ENCODE measurements at regions of chr14 and their contacts with region 1.

Region 1: GRCh38 chr14:100192672-100193416 is 33.4 kb upstream of the DEGS2 start:
- DNase-seq: peak; percentile 100
- ATAC-seq: peak; percentile 100
- H3K4me3 Mint-ChIP-seq: peak overlapping the region; percentile 58
- H3K27ac Mint-ChIP-seq: peak overlapping the region; percentile 90
- H3K4me1 Mint-ChIP-seq: peaks cover 15% of the 10 kb centered on the region
- H3K27me3 Mint-ChIP-seq: no peaks in the 10 kb centered on the region

Region 2: DNA sequence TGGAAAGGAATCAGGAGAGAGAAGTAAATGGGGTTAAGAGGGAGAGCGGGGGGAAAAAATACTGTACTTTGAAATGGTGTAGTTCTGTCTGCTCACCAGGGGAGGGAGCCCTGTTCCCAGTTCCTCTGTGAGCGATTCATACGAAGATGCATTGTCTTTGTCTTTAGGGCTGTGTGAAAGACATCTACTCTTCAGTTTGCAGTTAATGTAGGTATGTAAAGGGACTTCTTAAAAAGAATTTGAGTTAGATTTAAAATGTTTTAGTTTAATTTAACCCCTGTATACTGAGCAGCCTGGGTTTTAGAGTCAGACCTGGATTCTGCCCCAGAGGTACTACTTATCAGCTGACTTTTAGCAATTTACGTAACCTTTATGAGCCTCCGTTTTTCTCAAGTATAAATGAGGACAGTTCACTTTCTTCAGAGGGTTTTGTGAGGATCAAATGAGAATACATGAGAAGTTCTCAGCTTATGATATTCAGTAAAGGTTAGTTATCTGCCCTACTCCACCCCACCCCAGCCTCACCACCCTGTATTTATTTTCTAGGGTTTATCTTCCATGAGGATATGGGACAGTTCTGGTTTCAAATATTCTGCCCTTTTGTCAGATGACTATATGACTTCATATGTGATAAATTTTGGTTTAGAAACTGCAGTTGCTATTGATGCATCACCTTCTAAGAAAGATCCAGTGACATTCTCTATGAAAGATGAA is 210.2 kb before region 1 on chr14:
- CTCF ChIA-PET with region 1: interaction called, 50 read pairs
- DNase-seq: peak; percentile 70
- ATAC-seq: peak; percentile 92
- H3K4me3 Mint-ChIP-seq: no peak overlapping the region
- H3K27ac Mint-ChIP-seq: no peak overlapping the region
- H3K4me1 Mint-ChIP-seq: peaks cover 18% of the 10 kb centered on the region
- H3K27me3 Mint-ChIP-seq: no peaks in the 10 kb centered on the region

Region 3: DNA sequence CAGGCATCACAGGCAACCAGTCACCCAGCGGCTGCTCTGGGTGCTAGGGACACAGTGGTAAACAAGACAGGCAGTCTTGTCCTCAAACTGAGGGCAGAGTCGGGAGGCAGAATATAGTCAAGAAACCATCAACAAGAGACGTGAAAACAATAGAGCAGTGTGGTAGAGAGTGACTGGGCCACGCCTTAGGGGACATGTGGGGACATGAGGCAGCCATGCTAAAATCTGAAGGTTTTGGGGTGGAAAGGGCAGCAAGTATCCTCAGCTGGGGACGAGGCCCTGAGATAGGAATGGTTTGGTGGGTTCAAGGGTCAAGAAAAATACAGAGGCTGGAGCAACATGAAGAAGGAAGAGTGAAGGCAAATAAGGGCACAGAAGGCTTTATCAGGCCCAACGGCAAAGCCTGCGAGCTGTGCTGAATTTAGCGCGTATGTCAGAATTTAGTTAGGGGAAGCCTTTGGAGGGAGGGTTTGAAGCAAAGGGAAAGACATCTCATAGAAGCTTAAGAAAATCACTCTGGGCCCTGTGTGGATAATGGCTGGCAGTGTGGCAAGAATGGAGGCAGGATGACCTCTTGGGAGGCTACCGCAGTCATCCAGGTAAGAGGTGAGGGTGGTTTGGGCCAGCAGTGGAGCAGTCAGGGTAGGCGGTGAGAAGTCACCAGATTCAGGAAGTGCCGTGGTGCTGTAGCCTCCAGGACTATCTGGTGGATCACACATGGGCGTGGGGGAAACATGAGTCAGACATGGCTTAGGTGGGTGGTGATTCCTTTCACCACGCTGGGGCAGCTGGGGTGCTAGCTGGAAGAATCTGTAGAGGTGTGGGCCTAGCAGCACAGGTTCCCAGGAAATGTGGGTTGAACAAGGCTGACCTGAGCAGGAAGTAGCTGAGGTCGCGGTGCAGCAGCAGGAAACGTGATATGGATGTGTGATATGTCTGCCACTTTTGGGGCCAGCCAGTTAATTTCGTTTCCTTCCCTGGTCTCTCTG is 124.6 kb before region 1 on chr14:
- CTCF ChIA-PET with region 1: interaction called, 37 read pairs
- DNase-seq: peak; percentile 96
- ATAC-seq: peak; percentile 54
- H3K4me3 Mint-ChIP-seq: peak overlapping the region; percentile 97
- H3K27ac Mint-ChIP-seq: peak overlapping the region; percentile 99
- H3K4me1 Mint-ChIP-seq: peaks cover 54% of the 10 kb centered on the region
- H3K27me3 Mint-ChIP-seq: no peaks in the 10 kb centered on the region

Region 4: DNA sequence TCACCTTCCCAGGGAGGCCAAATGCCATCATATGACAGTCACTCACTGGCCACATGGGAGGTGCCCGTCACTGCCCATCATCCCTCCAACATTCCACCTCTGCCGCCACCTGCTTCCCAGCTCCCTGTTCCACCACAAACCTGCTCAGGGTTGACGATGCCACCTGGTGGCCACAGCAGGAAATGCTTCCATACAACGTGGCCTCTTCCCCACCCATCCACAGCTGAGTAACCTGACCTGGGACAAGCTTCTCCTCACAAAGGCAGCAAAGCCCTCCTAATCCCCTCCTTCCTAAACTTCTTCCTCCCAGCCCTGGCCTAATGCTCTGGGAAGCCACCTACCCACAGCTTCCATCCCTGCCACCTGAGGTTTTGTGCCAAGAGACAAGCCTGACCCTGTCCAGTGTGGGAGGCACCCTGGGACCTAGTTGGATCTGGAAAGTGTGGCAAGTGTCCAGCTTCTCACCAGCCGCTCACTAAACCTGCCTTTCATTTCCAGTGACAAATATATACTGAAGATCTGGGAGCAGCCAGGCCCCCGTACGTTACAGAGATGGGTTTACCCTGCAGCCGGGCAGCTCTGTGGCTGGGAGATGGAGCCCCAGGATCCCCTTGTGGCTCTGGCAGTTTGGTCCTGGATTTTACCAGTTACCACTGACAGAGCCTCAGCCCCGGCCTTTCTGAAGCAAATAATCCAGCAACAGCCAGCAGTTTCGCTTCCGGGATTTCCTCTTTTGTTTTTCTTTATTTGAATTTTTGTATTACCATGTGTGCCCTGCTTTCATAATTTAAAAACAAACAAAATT is 37.6 kb before region 1 on chr14:
- CTCF ChIA-PET with region 1: interaction called, 26 read pairs
- DNase-seq: no peak
- ATAC-seq: no peak
- H3K4me3 Mint-ChIP-seq: no peak overlapping the region
- H3K27ac Mint-ChIP-seq: no peak overlapping the region
- H3K4me1 Mint-ChIP-seq: peaks cover 7% of the 10 kb centered on the region
- H3K27me3 Mint-ChIP-seq: peaks cover 29% of the 10 kb centered on the region

Region 5: DNA sequence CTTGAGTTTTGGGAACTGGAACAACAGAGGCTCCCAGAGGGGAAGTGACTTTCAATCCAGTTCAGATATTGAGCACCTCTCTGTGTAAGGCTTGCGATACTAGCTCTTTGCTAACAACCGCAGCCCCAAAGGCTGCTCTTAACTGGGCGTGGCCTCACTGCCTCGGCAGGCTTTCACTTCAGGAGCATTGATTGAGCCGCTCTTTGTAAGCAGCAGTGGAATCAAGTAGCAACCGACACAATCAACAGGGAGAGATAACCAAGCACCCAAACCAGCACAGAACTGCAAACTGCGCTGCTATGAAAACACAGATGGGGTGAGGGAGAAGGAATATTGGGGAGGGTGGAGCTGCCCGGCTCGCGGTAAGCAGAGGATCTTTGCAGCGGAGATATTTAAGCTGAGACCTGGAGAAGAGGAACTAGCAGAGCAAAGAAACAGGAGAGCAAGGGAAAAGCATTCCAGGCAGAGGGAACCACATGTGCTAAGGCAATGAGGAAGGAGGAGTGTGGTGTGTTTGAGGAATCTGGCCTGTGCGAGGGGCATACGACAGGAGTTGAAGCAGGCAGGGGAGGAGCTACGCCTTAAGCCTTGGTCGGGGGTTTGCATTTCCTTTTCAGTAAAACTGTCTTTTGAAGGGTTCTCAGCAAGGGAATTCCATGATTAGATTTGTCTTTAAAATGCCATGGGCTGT is 28.8 kb after region 1 on chr14:
- CTCF ChIA-PET with region 1: interaction called, 56 read pairs
- DNase-seq: peak; percentile 89
- ATAC-seq: peak; percentile 93
- H3K4me3 Mint-ChIP-seq: no peak overlapping the region
- H3K27ac Mint-ChIP-seq: no peak overlapping the region
- H3K4me1 Mint-ChIP-seq: peaks cover 33% of the 10 kb centered on the region
- H3K27me3 Mint-ChIP-seq: no peaks in the 10 kb centered on the region

Region 6: GRCh38 chr14:100285021-100285912 is 92.4 kb after region 1 on chr14:
- CTCF ChIA-PET with region 1: interaction called, 13 read pairs
- DNase-seq: peak; percentile 83
- ATAC-seq: peak; percentile 93
- H3K4me3 Mint-ChIP-seq: peak overlapping the region; percentile 67
- H3K27ac Mint-ChIP-seq: peak overlapping the region; percentile 61
- H3K4me1 Mint-ChIP-seq: peaks cover 19% of the 10 kb centered on the region
- H3K27me3 Mint-ChIP-seq: no peaks in the 10 kb centered on the region

Region 7: GRCh38 chr14:100296106-100296651 is 103.3 kb after region 1 on chr14:
- CTCF ChIA-PET with region 1: no interaction called
- DNase-seq: no peak
- ATAC-seq: no peak
- H3K4me3 Mint-ChIP-seq: no peak overlapping the region
- H3K27ac Mint-ChIP-seq: no peak overlapping the region
- H3K4me1 Mint-ChIP-seq: no peaks in the 10 kb centered on the region
- H3K27me3 Mint-ChIP-seq: no peaks in the 10 kb centered on the region

Region 8: GRCh38 chr14:100330388-100330931 is 137.6 kb after region 1 on chr14:
- CTCF ChIA-PET with region 1: no interaction called
- DNase-seq: no peak
- ATAC-seq: peak; percentile 13
- H3K4me3 Mint-ChIP-seq: no peak overlapping the region
- H3K27ac Mint-ChIP-seq: no peak overlapping the region
- H3K4me1 Mint-ChIP-seq: no peaks in the 10 kb centered on the region
- H3K27me3 Mint-ChIP-seq: no peaks in the 10 kb centered on the region

Region 9: GRCh38 chr14:100446572-100446971 is 253.7 kb after region 1 on chr14:
- CTCF ChIA-PET with region 1: no interaction called
- DNase-seq: peak; percentile 56
- ATAC-seq: peak; percentile 75
- H3K4me3 Mint-ChIP-seq: no peak overlapping the region
- H3K27ac Mint-ChIP-seq: no peak overlapping the region
- H3K4me1 Mint-ChIP-seq: peaks cover 23% of the 10 kb centered on the region
- H3K27me3 Mint-ChIP-seq: no peaks in the 10 kb centered on the region